ENCODE measurements at regions of chr19 and their contacts with region 1.

Region 1: GRCh38 chr19:44164673-44165512 is at the start of gene ZNF226:
- DNase-seq: peak; percentile 91
- H3K4me3 Mint-ChIP-seq: peak within 1 kb of the TSS; percentile 96
- H3K27ac Mint-ChIP-seq: peak within 1 kb of the TSS; percentile 95
- H3K4me1 Mint-ChIP-seq: peaks cover 8% of the 10 kb centered on the region
- H3K27me3 Mint-ChIP-seq: no peaks in the 10 kb centered on the region
- CTCF ChIP-seq: no peak
- total RNA-seq, gene ZNF226: 25.0 and 25.6 TPM in 2 replicates

Region 2: DNA sequence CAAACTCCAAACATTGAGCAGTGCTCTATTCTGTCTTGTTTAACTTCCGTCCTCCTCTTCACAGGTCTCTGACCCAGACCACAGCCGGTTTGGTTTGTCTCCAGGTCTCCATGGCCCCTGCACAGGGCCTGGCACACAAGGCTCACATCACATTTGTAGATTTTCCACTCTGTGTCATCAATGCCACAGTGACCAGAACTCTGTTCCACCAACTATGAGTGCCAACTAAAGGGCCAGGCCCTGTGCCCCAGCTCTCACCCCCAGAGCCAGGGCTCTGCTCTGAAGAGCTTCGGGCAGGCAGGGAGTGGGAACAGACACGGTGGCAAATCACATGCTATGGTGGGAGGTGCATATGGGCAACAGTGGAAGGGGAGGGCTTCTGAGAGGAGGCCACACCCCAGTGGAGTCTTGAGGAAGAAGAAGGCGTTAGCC is 426.1 kb before region 1 on chr19:
- CTCF ChIA-PET with region 1: interaction called, 10 read pairs
- intact Hi-C with region 1: no loop called
- DNase-seq: no peak
- H3K4me3 Mint-ChIP-seq: peak overlapping the region; percentile 29
- H3K27ac Mint-ChIP-seq: peak overlapping the region; percentile 84
- H3K4me1 Mint-ChIP-seq: peaks cover 41% of the 10 kb centered on the region
- H3K27me3 Mint-ChIP-seq: no peaks in the 10 kb centered on the region
- CTCF ChIP-seq: no peak

Region 3: DNA sequence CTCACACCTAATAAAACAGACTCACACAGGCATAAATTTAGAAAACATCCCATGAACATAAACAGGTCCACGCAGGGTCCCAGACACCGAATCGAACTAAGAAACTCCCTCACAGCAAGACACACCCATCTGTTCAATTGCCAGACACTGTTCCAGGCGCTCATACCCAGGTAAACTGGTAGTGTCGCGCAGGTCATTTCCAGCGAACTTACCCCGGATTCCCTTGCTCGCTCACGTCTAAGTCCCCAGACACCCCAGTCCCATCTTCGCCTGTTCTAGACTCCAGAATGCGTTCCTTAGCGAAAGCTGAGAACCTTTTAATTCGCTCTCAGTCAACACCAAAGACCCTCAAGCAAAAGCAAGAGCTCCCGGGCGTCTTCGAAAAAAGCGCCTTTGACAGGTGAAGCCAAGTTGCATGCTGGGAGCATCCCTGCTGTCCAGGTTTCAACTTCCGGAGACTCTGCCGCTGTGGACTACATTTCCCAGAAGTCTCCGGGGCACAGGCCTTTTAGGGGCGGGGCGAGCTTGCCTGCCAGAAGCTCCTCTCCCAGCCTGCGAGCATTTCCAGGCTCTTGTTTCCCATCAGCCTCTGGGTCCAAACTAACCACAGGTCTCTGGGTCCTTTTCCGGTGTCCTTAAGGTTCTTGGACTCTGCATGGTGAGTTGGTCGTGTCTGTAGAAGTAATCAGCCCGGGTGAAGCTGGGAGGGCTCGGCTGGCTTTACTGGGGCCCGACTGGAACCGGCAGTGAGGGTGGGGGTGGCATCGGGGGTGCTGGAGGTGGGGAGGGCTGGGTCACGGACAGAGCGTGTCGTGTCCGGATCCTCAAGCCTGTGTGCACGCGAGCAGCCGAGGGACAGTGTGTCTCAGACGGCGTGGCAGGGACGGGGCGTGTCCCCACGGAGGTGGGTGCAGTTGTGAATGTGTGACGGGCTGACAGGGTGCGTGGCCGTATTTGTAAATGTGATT is 337.8 kb before region 1 on chr19 and contains the start of gene ZNF283:
- CTCF ChIA-PET with region 1: interaction called, 11 read pairs
- intact Hi-C with region 1: no loop called
- DNase-seq: peak; percentile 95
- H3K4me3 Mint-ChIP-seq: peak within 1 kb of the TSS; percentile 92
- H3K27ac Mint-ChIP-seq: peak within 1 kb of the TSS; percentile 70
- H3K4me1 Mint-ChIP-seq: peaks cover 20% of the 10 kb centered on the region
- H3K27me3 Mint-ChIP-seq: no peaks in the 10 kb centered on the region
- CTCF ChIP-seq: no peak
- total RNA-seq, gene ZNF283: 12.9 and 13.9 TPM in 2 replicates

Region 4: DNA sequence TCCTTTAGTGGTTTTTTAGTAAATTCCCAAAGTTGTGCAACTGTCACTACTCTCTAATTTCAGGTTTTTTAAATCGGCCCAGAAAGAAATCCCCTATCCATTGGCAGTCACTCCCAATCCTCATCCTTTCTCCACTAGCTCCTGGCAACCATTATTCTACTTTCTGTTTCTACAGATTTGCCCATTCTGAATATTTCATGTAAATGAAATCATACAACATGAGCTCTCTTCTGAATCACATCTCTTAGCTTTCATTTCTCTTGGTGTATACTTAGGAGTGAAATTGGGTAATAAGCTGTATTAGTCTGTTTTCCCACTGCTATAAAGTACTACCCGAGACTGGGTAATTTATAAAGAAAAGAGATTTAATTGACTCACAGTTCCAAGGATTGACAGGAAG is 122.7 kb before region 1 on chr19:
- CTCF ChIA-PET with region 1: no interaction called
- intact Hi-C with region 1: no loop called
- DNase-seq: no peak
- H3K4me3 Mint-ChIP-seq: no peak overlapping the region
- H3K27ac Mint-ChIP-seq: no peak overlapping the region
- H3K4me1 Mint-ChIP-seq: no peaks in the 10 kb centered on the region
- H3K27me3 Mint-ChIP-seq: no peaks in the 10 kb centered on the region
- CTCF ChIP-seq: no peak

Region 5: DNA sequence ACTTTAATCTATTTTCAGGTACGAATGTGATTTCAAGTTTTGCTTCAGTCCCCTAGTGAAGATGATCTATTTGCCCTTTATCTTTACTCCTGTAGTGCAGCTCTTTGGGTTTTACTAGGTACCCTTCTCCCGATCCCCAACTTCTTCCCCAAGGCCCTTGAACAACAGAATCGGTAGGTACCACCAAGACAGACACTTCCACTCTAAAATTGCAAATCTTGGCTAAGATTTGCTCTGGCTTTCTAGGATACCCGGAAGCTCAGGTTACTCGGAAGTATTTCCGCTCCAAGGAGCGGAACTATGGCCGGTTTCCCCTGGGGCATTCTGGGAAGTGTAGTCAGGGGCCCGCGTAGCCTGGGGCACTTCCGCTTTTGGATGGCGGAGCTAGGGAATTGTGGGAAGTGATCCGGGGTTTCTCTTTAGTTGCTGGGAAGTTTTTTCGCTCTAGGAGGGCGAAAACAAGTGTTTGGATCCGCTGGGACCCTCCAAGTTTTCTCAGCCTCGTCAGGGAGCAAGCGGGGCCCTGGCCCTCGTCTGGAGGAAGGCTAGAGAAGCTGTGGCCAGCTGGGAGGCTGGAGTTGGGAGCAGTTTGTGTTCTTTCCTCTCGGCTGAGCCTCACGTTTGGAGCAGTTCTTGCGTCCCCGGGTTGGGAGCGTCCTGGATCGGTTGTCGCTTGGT is 42.4 kb after region 1 on chr19:
- CTCF ChIA-PET with region 1: interaction called, 10 read pairs
- intact Hi-C with region 1: loop called (anchors 1 kb)
- DNase-seq: peak; percentile 94
- H3K4me3 Mint-ChIP-seq: peak overlapping the region; percentile 88
- H3K27ac Mint-ChIP-seq: peak overlapping the region; percentile 75
- H3K4me1 Mint-ChIP-seq: no peaks in the 10 kb centered on the region
- H3K27me3 Mint-ChIP-seq: no peaks in the 10 kb centered on the region
- CTCF ChIP-seq: no peak

Region 6: DNA sequence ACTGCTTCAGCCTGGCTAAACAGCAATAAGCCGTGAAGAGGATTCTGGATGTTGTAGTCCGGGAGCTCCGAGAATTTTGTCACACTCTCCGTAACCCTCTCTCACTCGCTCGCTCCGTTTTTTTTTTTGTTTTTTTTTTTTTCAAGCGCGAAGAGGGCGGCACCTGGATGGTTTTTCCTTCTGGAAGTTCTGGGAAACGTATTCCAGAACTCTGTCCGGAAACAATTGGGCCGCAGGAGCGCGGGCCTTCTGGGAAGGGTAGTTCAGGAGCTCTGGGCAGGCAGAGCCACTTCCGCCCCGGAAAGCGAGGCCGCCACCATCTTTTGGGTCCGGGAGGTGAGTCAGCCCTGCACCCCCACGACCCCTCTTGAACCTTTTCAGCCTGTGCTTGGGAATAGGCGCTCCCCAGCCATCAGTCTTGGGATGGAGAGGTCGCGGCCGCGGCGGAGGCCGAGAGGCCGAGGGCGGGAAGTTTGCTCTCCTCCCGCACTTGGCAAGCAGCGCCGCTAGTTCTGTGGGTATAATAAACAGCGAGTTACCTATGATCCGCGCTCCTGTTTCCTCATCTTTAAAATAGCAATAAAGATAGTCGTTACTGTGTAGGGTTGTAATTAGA is 47.5 kb after region 1 on chr19 and contains the start of gene ZNF227:
- CTCF ChIA-PET with region 1: interaction called, 10 read pairs
- intact Hi-C with region 1: loop called (anchors 1 kb)
- DNase-seq: peak; percentile 86
- H3K4me3 Mint-ChIP-seq: peak within 1 kb of the TSS; percentile 86
- H3K27ac Mint-ChIP-seq: peak within 1 kb of the TSS; percentile 24
- H3K4me1 Mint-ChIP-seq: peaks cover 8% of the 10 kb centered on the region
- H3K27me3 Mint-ChIP-seq: no peaks in the 10 kb centered on the region
- CTCF ChIP-seq: no peak
- total RNA-seq, gene ZNF227: 27.4 and 29.4 TPM in 2 replicates

Measured in Calu3 (cell line).